Naive thymus-derived CD8-positive, alpha-beta T cell (primary cell): ENCODE measurements at regions of chr19 and their contacts with region 1.

Region 1: DNA sequence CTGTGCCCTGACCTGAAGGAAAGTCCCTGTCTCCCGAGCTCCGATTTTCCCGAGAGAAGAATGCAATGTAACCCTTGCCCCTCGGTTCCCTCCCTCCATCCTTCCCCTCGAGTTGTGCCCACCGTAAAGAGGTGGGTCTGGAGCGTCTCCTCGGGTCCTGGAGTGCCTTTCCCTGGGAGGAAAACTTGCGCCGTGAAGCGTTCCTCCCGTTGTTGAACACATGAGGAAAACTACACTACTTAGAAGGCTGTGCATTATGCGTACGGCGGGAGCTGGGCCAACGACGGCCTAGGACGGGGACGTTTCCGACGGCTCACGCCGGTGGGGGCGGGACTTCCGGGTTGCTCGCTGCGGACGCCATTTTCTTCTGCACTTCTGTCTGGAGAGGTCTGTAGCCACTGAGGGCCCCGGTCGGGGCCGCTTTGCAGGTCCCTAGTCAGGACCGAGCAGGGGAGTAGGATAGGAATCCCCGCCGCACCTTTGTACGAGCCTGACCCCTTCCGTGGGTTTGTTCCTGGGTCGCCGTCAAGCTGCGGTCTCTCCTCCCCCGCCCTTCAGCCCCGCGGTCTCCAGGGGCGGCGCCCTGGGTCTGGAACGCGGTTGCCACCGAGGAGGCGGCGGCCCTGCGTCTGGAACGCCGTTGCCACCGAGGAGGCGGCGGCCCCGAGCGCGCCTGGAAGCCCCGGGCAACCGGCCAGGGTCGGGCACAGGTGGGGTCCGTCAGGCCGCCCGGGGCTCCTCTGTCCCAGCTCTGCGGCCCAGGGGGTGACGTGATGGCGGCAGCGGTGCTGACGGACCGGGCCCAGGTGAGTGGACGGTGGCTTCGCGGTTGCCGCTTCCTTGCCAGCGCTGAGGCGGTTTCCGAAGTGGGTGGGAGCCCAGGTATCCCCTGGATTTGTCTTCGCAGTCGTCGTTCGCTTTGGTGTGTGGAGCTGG is at the start of gene ZNF264:
- DNase-seq: peak; percentile 80 to 94 (median 86)
- ATAC-seq: peak; percentile 95 to 96
- H3K4me3 Mint-ChIP-seq: peak within 1 kb of the TSS; percentile 87 to 95 (median 94)
- H3K27ac Mint-ChIP-seq: peak within 1 kb of the TSS; percentile 94 to 98 (median 96)
- H3K4me1 Mint-ChIP-seq: peaks cover 17 to 37% (median 32%) of the 10 kb centered on the region in 4 donors
- H3K27me3 Mint-ChIP-seq: peaks cover 5 to 11% (median 6%) of the 10 kb centered on the region in 5 donors
- polyA plus RNA-seq, gene ZNF264: 21.7 to 30.6 (median 29.2) TPM

Region 2: DNA sequence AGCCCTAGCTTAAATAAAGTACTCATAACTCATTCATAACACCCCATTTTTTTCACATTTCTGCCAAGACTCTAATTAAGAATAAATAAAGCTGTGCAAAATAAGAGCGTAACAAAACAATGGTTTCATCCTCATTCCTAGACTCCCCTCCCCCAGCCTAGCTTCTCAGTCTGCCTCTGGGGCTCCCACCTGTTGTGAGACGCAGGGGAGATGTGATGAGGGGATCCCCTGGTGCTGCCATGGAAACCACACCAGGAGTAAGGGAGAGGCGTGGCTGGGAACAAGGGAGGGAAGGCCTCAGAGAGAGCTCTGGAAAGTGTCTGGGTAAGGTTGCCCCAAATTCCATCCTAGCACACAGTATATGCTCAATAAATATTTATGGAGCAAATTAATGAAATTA is 164.9 kb before region 1 on chr19:
- POLR2A ChIA-PET with region 1: no interaction called
- DNase-seq: no peak
- ATAC-seq: no peak
- H3K4me3 Mint-ChIP-seq: no peak overlapping the region
- H3K27ac Mint-ChIP-seq: no peak overlapping the region
- H3K4me1 Mint-ChIP-seq: no peaks in the 10 kb centered on the region
- H3K27me3 Mint-ChIP-seq: peaks cover 0 to 10% (median 0%) of the 10 kb centered on the region in 5 donors

Region 3: GRCh38 chr19:57171551-57172081 is 19.8 kb before region 1 on chr19:
- POLR2A ChIA-PET with region 1: interaction called, 16 read pairs
- DNase-seq: peak; percentile 17 to 83 (median 42)
- ATAC-seq: peak; percentile 86 to 94
- H3K4me3 Mint-ChIP-seq: peak overlapping the region; percentile 70 to 87 (median 82)
- H3K27ac Mint-ChIP-seq: peak overlapping the region in 6 of 10 donors; percentile 20 to 91 (median 88)
- H3K4me1 Mint-ChIP-seq: peaks cover 6 to 13% (median 10%) of the 10 kb centered on the region in 4 donors
- H3K27me3 Mint-ChIP-seq: peaks cover 0 to 28% (median 13%) of the 10 kb centered on the region in 5 donors